ENCODE measurements at regions of chr9 and their contacts with region 1.

Region 1: DNA sequence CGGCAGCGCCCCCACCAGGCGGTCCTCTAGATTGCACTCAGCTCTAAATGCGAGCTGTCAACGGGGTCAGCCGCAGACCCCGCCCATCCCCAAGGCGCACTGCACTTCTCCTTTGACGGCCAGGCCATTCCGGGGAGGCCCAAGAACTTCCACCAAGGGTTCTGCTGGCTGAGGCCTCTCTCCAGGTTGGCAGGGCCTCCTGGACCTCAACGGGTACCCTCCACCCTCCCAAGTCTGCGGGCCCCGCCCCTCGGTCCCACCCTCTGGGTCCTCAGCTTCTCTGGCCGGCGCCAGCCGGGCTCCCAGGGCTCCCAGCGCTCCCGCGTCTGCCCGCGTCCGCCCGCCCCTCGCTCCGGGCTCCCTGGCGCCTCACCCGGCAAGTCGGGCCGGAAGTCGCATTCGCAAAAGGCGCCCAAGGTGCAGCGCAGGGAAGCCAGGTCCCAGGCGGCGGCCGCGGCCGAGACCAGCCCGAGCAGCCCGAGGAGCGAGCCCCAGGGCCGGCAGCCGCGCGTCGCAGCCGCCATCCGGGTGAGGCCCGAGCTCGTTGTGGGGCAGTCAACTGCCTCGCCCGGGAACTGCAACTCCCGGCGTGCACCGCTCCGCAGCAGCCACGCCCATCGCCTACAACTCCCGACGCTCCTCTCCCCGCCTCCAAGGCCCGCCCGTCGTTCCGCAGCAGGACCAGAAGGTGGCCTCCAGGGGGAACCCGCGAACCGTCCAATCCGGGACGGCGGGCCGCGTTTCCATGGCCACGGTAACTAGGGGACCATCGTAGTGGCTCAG is at the start of gene TOR2A:
- DNase-seq: peak; percentile 98
- H3K4me3 Mint-ChIP-seq: peak within 1 kb of the TSS; percentile 89
- H3K27ac Mint-ChIP-seq: peak within 1 kb of the TSS; percentile 96
- H3K4me1 Mint-ChIP-seq: peaks cover 15% of the 10 kb centered on the region
- H3K27me3 Mint-ChIP-seq: no peaks in the 10 kb centered on the region
- total RNA-seq, gene TOR2A: 16.6 and 18.9 TPM in 2 replicates

Region 2: DNA sequence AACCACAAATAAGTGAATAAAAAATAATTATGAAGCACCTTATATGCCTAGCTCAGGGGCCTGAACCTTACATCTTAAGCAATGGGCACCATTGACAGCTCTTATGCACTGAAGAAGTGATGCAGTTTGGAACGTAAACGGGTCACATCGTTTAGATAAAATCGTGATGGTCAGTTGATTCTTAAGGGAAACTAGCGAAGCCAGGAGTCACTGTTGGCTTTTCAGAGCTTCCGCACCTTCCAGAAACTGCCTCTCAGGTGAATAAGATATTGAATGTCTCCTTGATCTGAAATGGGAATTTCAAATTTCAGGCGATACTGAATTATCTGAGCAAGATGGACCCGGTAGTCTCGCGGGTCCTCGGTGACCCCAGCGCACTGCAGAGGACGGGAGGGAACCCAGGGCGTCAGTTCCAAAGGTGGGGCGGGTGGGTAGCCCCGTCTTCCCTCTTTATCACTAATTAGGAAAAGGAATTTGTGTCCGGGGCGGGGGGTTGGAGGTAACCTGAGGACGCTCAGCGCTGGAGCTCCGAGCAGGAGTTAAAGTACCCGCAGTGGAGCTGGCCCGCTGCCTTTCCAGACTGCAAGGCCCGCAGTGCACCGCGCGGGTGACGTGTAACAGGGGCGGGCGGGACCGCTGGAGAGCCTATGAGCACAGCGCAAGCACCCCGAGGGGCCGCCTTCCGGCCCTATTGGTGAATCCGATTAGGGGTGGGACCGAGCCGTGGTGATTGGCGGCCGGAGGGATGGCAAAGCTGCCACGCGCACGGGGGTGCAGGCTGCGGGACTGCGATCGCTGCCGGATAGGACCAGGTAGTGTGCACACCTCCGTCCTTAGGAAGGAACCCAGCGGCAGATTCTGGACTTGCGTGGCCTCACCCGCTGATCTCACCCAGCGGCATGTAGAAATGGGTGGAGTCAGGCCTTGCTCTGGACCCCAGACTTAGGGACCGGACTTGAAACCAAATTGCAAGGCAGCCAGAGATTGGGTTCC is 490.0 kb before region 1 on chr9:
- intact Hi-C with region 1: loop called (anchors 10 kb)
- DNase-seq: peak; percentile 94
- H3K4me3 Mint-ChIP-seq: peak overlapping the region; percentile 83
- H3K27ac Mint-ChIP-seq: peak overlapping the region; percentile 21
- H3K4me1 Mint-ChIP-seq: peaks cover 12% of the 10 kb centered on the region
- H3K27me3 Mint-ChIP-seq: peaks cover 9% of the 10 kb centered on the region

Region 3: DNA sequence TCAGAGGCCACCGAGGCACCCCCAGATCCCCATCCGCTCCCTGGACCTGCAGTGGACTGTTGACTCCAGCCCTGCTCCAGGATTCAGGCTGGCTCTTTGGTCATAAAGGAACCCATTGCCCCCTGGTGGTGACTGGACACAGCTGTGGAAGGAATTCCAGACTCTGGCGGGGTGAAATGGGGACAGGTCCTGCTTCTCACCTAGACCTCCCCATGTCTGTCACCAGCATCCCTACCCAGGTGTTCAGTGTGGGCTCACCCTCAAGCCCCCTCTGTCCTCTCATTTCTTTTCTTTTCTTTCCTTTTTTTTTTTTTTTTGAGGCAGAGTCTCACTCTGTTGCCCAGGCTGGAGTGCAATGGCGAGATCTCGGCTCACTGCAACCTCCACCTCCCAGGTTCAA is 148.4 kb before region 1 on chr9:
- intact Hi-C with region 1: loop called (anchors 1 kb)
- DNase-seq: peak; percentile 33
- H3K4me3 Mint-ChIP-seq: no peak overlapping the region
- H3K27ac Mint-ChIP-seq: no peak overlapping the region
- H3K4me1 Mint-ChIP-seq: peaks cover 11% of the 10 kb centered on the region
- H3K27me3 Mint-ChIP-seq: peaks cover 14% of the 10 kb centered on the region

Region 4: GRCh38 chr9:127715394-127716337 is 19.3 kb before region 1 on chr9 and contains the starts of genes PTRH1 and TTC16:
- intact Hi-C with region 1: loop called (anchors 1 kb)
- DNase-seq: peak; percentile 97
- H3K4me3 Mint-ChIP-seq: peak within 1 kb of the TSS; percentile 98
- H3K27ac Mint-ChIP-seq: peak within 1 kb of the TSS; percentile 98
- H3K4me1 Mint-ChIP-seq: peaks cover 28% of the 10 kb centered on the region
- H3K27me3 Mint-ChIP-seq: peaks cover 2% of the 10 kb centered on the region
- total RNA-seq, gene PTRH1: 22.9 and 23.5 TPM in 2 replicates
- total RNA-seq, gene TTC16: 0.10 TPM in 1 of 2 replicates, not detected in the other

Region 5: DNA sequence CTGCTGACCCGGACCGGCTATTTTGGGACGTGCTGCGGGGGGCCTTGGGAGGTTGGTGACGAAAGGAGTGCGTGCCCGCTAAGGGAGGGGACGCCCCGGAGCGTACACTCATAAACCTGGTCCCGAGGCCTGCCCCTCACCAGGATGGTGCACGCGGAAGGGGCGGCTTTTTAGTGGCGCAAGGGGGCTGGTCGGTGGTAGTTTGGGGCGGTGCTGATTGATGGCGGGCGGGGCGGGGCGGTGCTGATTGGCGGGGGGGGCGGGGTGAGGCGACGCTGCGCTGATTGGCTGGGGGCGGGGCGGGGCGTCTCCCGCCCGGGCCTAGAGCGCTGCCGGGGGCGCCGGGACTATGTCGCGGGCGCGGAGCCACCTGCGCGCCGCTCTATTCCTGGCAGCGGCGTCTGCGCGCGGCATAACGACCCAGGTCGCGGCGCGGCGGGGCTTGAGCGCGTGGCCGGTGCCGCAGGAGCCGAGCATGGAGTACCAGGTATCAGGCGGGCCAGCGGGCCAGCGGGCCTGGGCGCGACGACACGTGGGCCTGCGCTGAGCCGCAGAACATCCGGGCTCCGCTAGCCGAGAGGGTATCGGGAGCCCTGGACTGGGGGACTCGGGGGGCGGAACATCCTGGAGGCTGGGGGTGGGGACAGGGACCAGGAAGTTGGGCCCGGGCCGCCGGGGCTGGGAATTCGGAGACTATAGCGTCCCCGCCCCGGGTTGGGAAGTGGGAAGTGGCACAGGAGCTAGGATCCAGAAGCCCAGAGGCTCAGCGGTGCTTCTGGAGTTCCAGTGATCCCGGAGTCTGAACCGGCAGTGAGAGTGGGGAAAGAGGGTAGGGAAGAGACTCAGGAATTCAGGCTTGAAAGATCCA is 67.9 kb after region 1 on chr9 and contains the start of gene FPGS:
- intact Hi-C with region 1: loop called (anchors 1 kb)
- DNase-seq: peak; percentile 74
- H3K4me3 Mint-ChIP-seq: peak within 1 kb of the TSS; percentile 97
- H3K27ac Mint-ChIP-seq: peak within 1 kb of the TSS; percentile 93
- H3K4me1 Mint-ChIP-seq: peaks cover 17% of the 10 kb centered on the region
- H3K27me3 Mint-ChIP-seq: no peaks in the 10 kb centered on the region
- total RNA-seq, gene FPGS: 128 and 130 TPM in 2 replicates

Region 6: DNA sequence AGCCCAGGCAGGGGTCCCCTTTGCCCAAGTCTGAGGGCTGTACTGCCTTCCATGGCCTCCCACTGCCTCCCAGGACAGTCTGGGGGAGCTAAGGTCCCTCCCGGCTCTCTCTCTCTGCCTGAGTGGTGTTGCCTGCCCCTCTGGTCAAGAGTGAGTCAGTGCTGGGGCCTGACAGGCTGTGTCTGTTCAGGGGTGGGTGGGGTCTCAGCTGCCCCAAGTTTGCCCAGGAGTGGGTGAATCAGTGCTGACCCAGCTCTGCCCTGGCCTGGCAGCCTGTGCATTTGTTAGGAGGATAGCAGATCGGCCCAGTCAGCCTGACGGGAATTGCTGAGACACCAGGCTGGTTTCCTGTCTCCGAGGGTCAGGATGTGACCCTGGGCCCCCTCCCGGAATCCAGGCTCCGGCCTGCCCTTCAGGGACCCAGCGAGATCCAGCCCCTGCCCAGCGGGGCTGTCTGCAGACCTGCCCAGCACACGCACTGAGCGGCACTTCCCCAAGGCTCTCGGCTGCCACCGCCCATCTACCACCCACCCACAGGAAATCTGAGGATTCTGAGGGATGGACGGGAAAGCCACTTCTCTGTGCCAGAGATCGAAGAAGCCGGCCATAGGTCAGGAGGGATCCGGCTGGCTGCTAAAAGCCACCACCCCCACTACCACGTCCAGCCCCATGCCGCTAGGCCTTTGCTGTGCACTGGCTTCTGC is 103.6 kb after region 1 on chr9:
- intact Hi-C with region 1: no loop called
- DNase-seq: no peak
- H3K4me3 Mint-ChIP-seq: no peak overlapping the region
- H3K27ac Mint-ChIP-seq: no peak overlapping the region
- H3K4me1 Mint-ChIP-seq: no peaks in the 10 kb centered on the region
- H3K27me3 Mint-ChIP-seq: no peaks in the 10 kb centered on the region

Region 7: DNA sequence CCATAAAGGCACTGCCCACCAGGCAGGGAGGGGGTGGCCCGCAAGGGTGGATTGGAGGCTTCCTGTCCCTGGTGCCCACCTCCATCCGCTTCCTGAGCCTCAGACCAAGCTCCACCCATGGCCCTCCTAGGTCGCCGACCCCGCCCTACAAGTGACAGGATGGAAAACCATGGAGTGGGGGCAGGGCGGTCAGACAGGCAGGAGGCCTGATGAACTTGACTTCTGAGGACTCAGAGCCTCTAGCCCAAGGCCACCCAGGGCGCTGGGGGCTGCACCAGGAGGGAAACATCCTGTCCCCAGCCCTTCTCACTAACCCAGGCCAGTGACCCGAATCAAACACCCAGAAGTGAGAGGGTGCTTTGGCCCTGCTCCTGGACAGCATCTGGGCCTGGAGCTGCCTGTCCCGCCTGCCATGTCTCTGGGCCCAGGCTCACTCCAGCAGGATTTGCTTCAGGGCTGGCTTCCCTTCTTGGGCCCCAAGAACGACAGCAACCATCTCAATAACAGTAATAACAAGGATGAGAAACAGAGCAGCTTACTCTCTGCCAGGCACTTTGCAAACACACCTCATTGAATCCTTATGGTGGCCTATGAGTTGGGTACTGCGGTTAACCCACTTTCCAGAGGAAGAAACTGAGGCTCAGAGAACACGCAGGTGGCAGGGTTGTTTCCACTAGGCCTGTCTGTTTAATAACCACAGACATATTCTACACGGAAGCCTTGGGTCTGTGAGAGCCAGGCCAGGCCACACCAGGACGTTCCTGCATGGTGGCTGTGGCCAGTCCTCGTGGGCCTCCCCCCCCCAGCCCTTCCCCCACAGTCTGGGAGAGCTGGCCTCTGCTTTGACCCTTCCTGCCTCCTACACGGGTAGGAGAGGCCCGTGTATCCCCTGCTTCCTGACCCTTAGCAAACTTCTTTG is 168.9 kb after region 1 on chr9:
- intact Hi-C with region 1: loop called (anchors 1 kb)
- DNase-seq: peak; percentile 83
- H3K4me3 Mint-ChIP-seq: peak overlapping the region; percentile 93
- H3K27ac Mint-ChIP-seq: peak overlapping the region; percentile 100
- H3K4me1 Mint-ChIP-seq: peaks cover 47% of the 10 kb centered on the region
- H3K27me3 Mint-ChIP-seq: no peaks in the 10 kb centered on the region

Measured in activated T-helper 1 cell treated with anti-CD3 and anti-CD28 coated beads, Interleukin-12 subunit alpha, Interleukin-12 subunit beta, Interleukin-2, Interleukin-4 antibody, amounts not matched to agents 30 ng/mL and 10 ng/mL and 1 ng/mL, durations not matched to agents 14 hours and 24 hours and 36 hours (primary cell).